PC-9 (cell line): ENCODE measurements at regions of chr10 and their contacts with region 1.

Region 1: GRCh38 chr10:68752711-68753350 is 31.8 kb downstream of the CCAR1 start:
- DNase-seq: no peak
- H3K4me3 ChIP-seq: no peak overlapping the region
- H3K27ac ChIP-seq: no peak overlapping the region
- H3K4me1 ChIP-seq: no peaks in the 10 kb centered on the region
- H3K27me3 ChIP-seq: no peaks in the 10 kb centered on the region
- CTCF ChIP-seq: no peak

Region 2: DNA sequence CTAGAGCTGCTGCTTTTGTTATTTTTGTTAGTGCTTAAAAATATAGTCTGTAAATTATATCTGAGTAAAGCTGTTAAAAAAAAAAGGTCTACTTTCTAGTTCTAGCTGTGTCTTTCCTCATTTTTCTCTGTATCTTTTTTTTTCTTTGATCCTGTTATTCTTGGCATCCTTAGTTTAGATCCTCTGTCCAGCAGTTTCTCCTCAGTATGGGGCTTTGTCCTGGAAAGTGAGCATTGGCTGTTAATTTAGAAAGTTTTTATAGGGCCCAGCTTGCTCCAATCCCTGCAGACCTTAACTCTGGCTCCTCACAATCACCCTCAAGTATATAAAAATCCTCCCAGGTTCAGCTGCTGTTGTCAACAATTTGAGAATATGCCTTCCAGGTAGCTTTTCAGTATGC is 171.8 kb after region 1 on chr10:
- CTCF ChIA-PET with region 1: no interaction called
- POLR2A ChIA-PET with region 1: interaction called, 24 read pairs
- intact Hi-C with region 1: no loop called
- DNase-seq: no peak
- H3K4me3 ChIP-seq: no peak overlapping the region
- H3K27ac ChIP-seq: no peak overlapping the region
- H3K4me1 ChIP-seq: no peaks in the 10 kb centered on the region
- H3K27me3 ChIP-seq: no peaks in the 10 kb centered on the region
- CTCF ChIP-seq: no peak

Region 3: DNA sequence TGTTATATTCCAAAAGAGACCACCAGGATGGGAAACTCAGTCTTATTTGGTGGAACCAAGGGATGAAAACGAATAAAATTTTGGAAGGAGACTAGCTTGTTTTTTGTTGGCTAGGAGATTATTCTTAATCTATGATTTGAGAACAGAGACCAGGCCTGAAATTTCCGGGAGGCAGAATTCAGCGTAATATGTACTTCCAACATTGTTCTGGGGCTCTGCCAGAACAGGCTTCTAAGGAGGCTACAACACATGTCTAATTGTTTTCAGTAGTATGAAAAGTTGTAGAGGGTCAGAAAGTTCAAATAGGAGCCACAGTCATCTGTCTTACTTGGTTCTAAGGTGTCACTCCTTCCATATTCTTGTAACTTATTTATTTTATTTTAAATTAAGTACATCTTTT is 204.8 kb after region 1 on chr10:
- CTCF ChIA-PET with region 1: no interaction called
- POLR2A ChIA-PET with region 1: no interaction called
- intact Hi-C with region 1: no loop called
- DNase-seq: no peak
- H3K4me3 ChIP-seq: peak overlapping the region; percentile 85
- H3K27ac ChIP-seq: peak overlapping the region; percentile 86
- H3K4me1 ChIP-seq: peaks cover 29% of the 10 kb centered on the region
- H3K27me3 ChIP-seq: no peaks in the 10 kb centered on the region
- CTCF ChIP-seq: no peak

Region 4: DNA sequence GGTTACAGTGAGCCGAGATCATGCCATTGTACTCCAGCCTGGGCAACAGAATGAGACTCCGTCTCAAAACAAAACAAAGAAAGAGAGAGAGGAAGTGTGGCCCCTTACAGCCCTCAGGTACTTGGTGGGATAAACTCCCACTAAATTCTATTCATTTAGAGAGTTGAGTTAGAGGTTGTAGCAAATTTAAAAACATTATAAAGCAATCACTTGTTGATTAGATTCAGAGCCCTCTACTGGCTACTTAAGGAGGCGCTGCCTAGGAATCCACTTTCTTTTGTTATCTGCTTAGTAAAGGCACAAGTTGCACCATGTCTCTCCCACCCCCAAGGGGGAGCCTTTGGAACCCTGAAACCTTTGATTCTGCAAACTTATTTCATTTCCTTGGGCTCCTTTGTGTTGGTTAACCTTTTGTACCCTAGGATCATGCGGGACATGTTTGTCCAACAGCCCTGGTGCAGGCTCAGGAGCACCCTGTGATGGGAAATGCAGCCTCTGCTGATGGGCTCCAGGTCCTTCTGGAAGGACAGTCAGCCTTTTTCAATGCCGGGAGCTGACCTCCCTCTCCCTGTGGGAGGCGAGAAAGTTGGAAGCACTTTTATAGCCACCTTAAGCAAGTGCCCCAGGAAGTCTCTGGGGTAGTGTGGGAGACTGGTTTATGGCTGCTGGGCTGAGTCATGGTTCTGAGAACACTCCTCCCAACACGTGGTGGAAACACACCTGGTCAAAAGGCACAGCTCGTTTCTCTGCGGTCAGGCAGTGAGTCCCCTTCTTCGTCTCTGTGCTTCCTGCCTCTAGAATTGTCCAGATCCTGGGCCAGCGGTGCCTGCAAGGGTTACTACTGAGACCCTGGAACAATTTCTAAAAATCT is 469.6 kb after region 1 on chr10:
- CTCF ChIA-PET with region 1: no interaction called
- POLR2A ChIA-PET with region 1: no interaction called
- intact Hi-C with region 1: no loop called
- DNase-seq: peak; percentile 81 to 96
- H3K4me3 ChIP-seq: peak overlapping the region; percentile 35; the same call in 1 of the 2 replicates
- H3K27ac ChIP-seq: peak overlapping the region; percentile 98
- H3K4me1 ChIP-seq: peaks cover 73% of the 10 kb centered on the region
- H3K27me3 ChIP-seq: no peaks in the 10 kb centered on the region
- CTCF ChIP-seq: peak; percentile 87